ENCODE measurements at regions of chr5 and their contacts with region 1.

Region 1: GRCh38 chr5:139403787-139404483 is at the start of gene SPATA24:
- DNase-seq: peak; percentile 98 to 99 (median 99)
- H3K4me3 ChIP-seq: peak within 1 kb of the TSS; percentile 39 to 82 (median 71)
- H3K27ac ChIP-seq: peak within 1 kb of the TSS; percentile 56 to 84
- H3K4me1 ChIP-seq: peaks cover 15 to 27% (median 21%) of the 10 kb centered on the region in 4 experiments
- H3K27me3 ChIP-seq: no peaks in the 10 kb centered on the region

Region 2: DNA sequence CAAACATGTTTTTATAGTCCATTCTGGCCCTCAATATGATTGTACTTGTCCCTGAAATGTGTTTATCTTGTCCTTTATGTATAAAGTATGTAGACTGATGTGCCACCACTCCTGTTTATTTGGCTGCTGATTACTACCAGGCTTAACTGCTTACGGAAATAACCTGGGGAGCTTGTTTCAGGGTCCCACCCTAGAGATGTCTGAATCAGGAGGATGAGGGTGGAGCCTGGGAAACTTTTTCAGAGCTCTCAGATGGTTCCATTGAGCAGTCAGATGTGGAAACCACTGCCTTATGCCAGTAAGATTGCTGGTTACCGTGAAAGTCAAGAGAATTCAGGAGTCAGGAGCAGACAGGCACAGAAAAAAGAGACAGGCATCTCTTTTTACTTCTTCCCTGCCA is 40.0 kb before region 1 on chr5:
- CTCF ChIA-PET with region 1: no interaction called
- POLR2A ChIA-PET with region 1: no interaction called
- DNase-seq: no peak
- H3K4me3 ChIP-seq: no peak overlapping the region
- H3K27ac ChIP-seq: no peak overlapping the region
- H3K4me1 ChIP-seq: no peaks in the 10 kb centered on the region
- H3K27me3 ChIP-seq: no peaks in the 10 kb centered on the region

Region 3: GRCh38 chr5:139385061-139386049 is 18.6 kb before region 1 on chr5:
- CTCF ChIA-PET with region 1: interaction called, 60 read pairs
- POLR2A ChIA-PET with region 1: no interaction called
- DNase-seq: peak in 2 of 3 donors; percentile 51 to 59
- H3K4me3 ChIP-seq: peak overlapping the region; percentile 24 to 77 (median 67)
- H3K27ac ChIP-seq: peak overlapping the region; percentile 72 to 95
- H3K4me1 ChIP-seq: peaks cover 6 to 84% (median 80%) of the 10 kb centered on the region in 4 experiments
- H3K27me3 ChIP-seq: no peaks in the 10 kb centered on the region

Region 4: DNA sequence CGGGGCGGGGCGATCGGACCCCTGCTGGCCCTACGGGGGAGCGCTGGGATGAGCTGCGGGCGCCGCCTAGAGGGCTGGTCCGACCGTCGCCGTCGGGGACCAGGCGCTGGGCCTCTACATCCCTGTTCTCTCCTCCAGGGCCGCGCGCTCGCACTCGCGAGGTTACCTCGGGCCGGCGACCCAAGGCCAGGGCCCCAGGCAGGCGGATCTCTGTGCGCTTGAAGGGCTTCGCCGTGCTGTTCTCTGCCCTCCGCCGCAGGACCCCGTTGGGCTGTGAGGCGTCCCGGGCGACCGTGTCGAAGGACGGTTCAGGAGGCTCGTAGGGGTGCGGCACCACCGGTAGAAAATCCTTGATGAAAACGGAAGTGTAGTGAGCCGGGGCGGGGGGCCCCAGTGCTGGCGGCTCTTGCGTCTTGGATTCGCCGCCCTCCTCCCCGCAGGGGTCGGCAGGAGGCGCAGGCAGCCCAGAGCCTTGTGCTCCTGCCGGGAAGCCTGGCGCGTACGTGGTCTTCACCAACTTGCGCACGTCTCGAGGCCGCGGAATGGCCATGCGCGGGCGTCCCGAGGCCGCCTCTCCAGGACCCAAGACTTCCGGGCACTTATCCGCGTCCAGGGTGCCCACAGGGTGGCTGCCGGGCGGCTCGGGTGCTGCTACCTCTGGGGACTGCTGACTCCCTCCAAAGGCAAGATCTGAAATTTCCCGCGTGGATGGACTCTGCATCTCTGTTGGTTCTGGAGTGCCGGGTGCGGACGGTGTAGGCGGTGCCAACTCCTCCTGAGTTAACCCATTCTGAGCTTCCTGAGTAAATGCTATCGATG is 11.0 kb before region 1 on chr5:
- CTCF ChIA-PET with region 1: interaction called, 60 read pairs
- POLR2A ChIA-PET with region 1: interaction called, 3 read pairs
- DNase-seq: peak; percentile 91 to 93 (median 92)
- H3K4me3 ChIP-seq: peak overlapping the region; percentile 47 to 81 (median 72)
- H3K27ac ChIP-seq: peak overlapping the region in 1 of 2 experiments; percentile 95
- H3K4me1 ChIP-seq: peaks cover 0 to 73% (median 68%) of the 10 kb centered on the region in 4 experiments
- H3K27me3 ChIP-seq: no peaks in the 10 kb centered on the region

Region 5: DNA sequence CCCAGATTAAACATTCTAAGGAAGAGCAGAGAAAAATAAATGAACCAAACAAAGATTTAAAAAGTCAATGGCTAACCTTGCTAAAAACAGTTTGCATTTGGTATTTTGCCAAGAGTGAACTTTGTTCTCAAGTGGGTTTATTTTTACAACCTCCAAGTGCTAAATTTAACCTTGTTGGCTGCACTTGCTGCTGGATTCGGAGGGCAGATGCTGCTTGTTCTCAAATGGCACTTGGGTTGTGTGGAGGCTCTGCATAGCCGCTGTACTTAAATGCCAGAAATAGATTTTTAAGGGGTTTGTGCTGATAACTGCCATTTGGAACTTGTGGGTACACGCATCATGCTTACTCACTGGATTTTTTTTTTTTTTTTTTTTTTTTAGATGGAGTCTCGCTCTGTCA is 13.3 kb after region 1 on chr5:
- CTCF ChIA-PET with region 1: interaction called, 53 read pairs
- POLR2A ChIA-PET with region 1: no interaction called
- DNase-seq: peak in 2 of 3 donors; percentile 75 to 84
- H3K4me3 ChIP-seq: peak overlapping the region in 1 of 7 experiments; percentile 38
- H3K27ac ChIP-seq: peak overlapping the region in 1 of 2 experiments; percentile 44
- H3K4me1 ChIP-seq: peaks cover 4 to 49% (median 36%) of the 10 kb centered on the region in 4 experiments
- H3K27me3 ChIP-seq: no peaks in the 10 kb centered on the region